Activated T-helper 2 cell treated with anti-CD3 and anti-CD28 coated beads, Interferon-gamma antibody, Interleukin-2, Interleukin-4, amounts not matched to agents 10 μg/mL and 5 μg/mL and 100 μg/mL, durations not matched to agents 14 hours and 24 hours and 36 hours (primary cell): ENCODE measurements at regions of chr14 and their contacts with region 1.

Region 1: GRCh38 chr14:77457522-77458290 is at the starts of genes AHSA1 and VIPAS39:
- DNase-seq: peak; percentile 95
- H3K4me3 Mint-ChIP-seq: peak within 1 kb of the TSS; percentile 97
- H3K27ac Mint-ChIP-seq: peak within 1 kb of the TSS; percentile 98
- H3K4me1 Mint-ChIP-seq: peaks cover 23% of the 10 kb centered on the region
- H3K27me3 Mint-ChIP-seq: no peaks in the 10 kb centered on the region
- total RNA-seq, gene AHSA1: 301 and 332 TPM in 2 replicates
- total RNA-seq, gene VIPAS39: 15.7 and 16.5 TPM in 2 replicates

Region 2: GRCh38 chr14:76767681-76768656 is 689.7 kb before region 1 on chr14:
- intact Hi-C with region 1: no loop called
- DNase-seq: peak; percentile 66
- H3K4me3 Mint-ChIP-seq: no peak overlapping the region
- H3K27ac Mint-ChIP-seq: peak overlapping the region; percentile 60
- H3K4me1 Mint-ChIP-seq: peaks cover 21% of the 10 kb centered on the region
- H3K27me3 Mint-ChIP-seq: peaks cover 19% of the 10 kb centered on the region

Region 3: DNA sequence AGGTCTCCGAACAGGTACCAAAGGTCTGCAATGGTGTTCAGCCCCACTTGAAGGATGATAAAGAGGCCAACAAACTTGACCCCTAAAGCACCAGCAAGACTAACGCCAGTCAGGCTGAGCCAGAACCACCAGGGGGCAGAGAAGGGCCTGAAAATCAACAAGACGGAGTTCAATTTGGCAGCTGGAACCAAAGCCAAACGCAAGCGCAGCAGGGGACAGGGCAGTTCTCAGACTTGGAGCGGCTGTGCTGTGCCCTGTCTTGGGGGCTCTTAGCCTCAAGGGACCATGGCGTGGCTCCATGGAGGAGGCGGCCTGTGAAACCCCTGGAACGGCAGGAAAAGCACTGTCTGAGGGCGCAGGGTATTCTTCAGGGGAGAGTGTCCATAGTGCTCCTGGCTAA is 156.6 kb before region 1 on chr14:
- intact Hi-C with region 1: loop called (anchors 5 kb)
- DNase-seq: peak; percentile 43
- H3K4me3 Mint-ChIP-seq: no peak overlapping the region
- H3K27ac Mint-ChIP-seq: no peak overlapping the region
- H3K4me1 Mint-ChIP-seq: peaks cover 25% of the 10 kb centered on the region
- H3K27me3 Mint-ChIP-seq: peaks cover 1% of the 10 kb centered on the region

Region 4: GRCh38 chr14:77376771-77377501 is 80.8 kb before region 1 on chr14 and contains the starts of genes SAMD15 and TMED8:
- intact Hi-C with region 1: loop called (anchors 1 kb)
- DNase-seq: peak; percentile 80
- H3K4me3 Mint-ChIP-seq: peak within 1 kb of the TSS; percentile 90
- H3K27ac Mint-ChIP-seq: peak within 1 kb of the TSS; percentile 89
- H3K4me1 Mint-ChIP-seq: peaks cover 37% of the 10 kb centered on the region
- H3K27me3 Mint-ChIP-seq: peaks cover 2% of the 10 kb centered on the region
- total RNA-seq, gene SAMD15: 0.41 and 0.57 TPM in 2 replicates
- total RNA-seq, gene TMED8: 28.0 and 29.0 TPM in 2 replicates

Region 5: GRCh38 chr14:77616454-77617229 is 158.9 kb after region 1 on chr14 and contains the start of gene SPTLC2:
- intact Hi-C with region 1: loop called (anchors 1 kb)
- DNase-seq: peak; percentile 96
- H3K4me3 Mint-ChIP-seq: peak within 1 kb of the TSS; percentile 93
- H3K27ac Mint-ChIP-seq: peak within 1 kb of the TSS; percentile 92
- H3K4me1 Mint-ChIP-seq: peaks cover 35% of the 10 kb centered on the region
- H3K27me3 Mint-ChIP-seq: no peaks in the 10 kb centered on the region
- total RNA-seq, gene SPTLC2: 26.6 and 29.6 TPM in 2 replicates

Region 6: GRCh38 chr14:77707724-77708408 is 250.2 kb after region 1 on chr14 and contains the starts of genes ALKBH1 and SLIRP:
- intact Hi-C with region 1: loop called (anchors 1 kb)
- DNase-seq: peak; percentile 82
- H3K4me3 Mint-ChIP-seq: peak within 1 kb of the TSS; percentile 95
- H3K27ac Mint-ChIP-seq: peak within 1 kb of the TSS; percentile 93
- H3K4me1 Mint-ChIP-seq: peaks cover 34% of the 10 kb centered on the region
- H3K27me3 Mint-ChIP-seq: no peaks in the 10 kb centered on the region
- total RNA-seq, gene ALKBH1: 14.6 and 15.3 TPM in 2 replicates
- total RNA-seq, gene SLIRP: 133 and 145 TPM in 2 replicates

Region 7: DNA sequence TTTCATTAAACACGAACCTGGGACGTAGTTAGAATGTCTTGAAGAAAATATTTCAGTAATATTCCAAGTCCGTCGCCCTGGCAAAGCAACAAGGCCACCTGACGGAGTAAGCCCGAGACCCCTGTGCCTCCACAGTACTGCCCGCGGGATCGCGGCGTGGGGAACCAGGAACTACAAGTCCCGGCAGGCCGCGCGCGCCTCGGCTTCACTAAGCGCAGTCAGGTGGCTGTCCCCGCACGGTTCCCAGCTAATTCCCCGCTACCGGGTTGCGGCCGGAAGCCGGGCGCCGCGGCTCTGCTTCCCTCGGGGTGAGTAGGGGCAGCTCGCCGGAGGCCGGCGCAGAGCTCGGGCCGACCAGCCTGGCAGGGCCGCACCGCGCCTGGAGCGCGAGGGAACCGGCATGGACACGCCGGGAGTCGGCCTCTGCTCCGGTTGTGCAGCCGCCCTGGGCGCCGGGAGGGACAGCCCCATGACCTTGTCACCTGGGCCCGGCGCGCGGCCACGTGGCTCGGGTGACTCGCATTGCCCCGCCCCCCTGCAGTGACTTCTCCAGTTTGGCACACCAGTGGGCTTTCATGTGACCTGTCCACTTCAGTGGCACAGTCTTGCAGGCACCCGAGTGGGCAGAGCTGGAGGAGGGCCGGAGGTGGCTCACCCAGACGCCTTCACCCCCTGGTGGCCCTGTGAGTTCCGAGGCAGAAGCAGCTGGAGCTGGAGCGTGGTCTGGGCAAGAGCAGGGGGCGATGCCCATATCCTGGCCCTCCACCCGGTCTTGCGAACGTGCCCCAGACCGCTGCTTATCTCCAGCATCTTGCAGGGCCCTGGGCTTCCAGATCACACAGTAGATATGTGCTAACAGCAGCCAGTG is 342.4 kb after region 1 on chr14 and contains the start of gene ADCK1:
- intact Hi-C with region 1: loop called (anchors 1 kb)
- DNase-seq: peak; percentile 80
- H3K4me3 Mint-ChIP-seq: peak within 1 kb of the TSS; percentile 86
- H3K27ac Mint-ChIP-seq: peak within 1 kb of the TSS; percentile 86
- H3K4me1 Mint-ChIP-seq: peaks cover 8% of the 10 kb centered on the region
- H3K27me3 Mint-ChIP-seq: peaks cover 3% of the 10 kb centered on the region
- total RNA-seq, gene ADCK1: 4.1 and 5.2 TPM in 2 replicates